ENCODE measurements at regions of chr17 and their contacts with region 1.

Region 1: GRCh38 chr17:56715613-56716357 is 117.9 kb downstream of the C17orf67 start:
- DNase-seq: peak; percentile 83
- ATAC-seq: peak; percentile 99
- H3K4me3 ChIP-seq: no peak overlapping the region
- H3K27ac ChIP-seq: no peak overlapping the region
- H3K4me1 ChIP-seq: peaks cover 0 to 4% of the 10 kb centered on the region in 2 experiments; a peak in 1 of 4 replicates
- H3K27me3 ChIP-seq: no peaks in the 10 kb centered on the region
- CTCF ChIP-seq: peak; percentile 85 to 98 (median 97)
- POLR2A ChIP-seq: no peak
- RAD21 ChIP-seq: peak; percentile 98

Region 2: DNA sequence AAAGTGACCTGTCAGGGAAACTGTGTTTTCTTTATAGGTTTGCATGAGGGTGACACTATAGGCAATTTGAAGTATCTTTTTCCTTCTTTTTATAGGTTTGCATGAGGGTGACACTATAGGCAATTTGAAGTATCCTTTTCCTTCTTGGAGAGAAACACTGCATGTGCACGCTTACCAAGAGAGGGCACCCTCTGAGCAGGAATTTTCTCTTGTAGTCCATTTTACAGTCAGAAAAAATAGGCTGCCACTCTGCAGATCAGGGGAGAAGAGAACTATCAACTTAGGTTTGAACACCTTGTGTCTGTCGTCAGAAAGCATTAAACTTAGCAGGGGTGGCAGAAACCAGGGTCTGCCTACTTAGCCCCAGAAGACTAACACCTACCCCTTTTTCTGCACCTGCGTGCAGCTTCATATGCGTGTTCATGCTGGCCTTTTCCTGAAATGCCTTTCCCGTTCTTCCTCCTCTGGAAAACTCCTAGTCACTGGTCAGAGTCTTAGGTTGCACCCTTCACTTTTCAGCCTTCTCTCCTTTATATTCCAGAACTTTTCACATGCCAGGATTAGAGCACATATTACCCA is 1188.2 kb before region 1 on chr17:
- CTCF ChIA-PET with region 1: no interaction called
- POLR2A ChIA-PET with region 1: no interaction called
- RAD21 ChIA-PET with region 1: no interaction called
- intact Hi-C with region 1: loop called (anchors 10 kb)
- DNase-seq: peak; percentile 42
- ATAC-seq: no peak
- H3K4me3 ChIP-seq: no peak overlapping the region
- H3K27ac ChIP-seq: no peak overlapping the region
- H3K4me1 ChIP-seq: no peaks in the 10 kb centered on the region
- H3K27me3 ChIP-seq: 0 out of 2 replicates have a peak, but pooled peaks cover 9% of the 10 kb centered on the region
- CTCF ChIP-seq: peak; percentile 55 to 58 (median 57); a peak in 5 of 6 replicates
- POLR2A ChIP-seq: no peak
- RAD21 ChIP-seq: peak; percentile 76

Region 3: DNA sequence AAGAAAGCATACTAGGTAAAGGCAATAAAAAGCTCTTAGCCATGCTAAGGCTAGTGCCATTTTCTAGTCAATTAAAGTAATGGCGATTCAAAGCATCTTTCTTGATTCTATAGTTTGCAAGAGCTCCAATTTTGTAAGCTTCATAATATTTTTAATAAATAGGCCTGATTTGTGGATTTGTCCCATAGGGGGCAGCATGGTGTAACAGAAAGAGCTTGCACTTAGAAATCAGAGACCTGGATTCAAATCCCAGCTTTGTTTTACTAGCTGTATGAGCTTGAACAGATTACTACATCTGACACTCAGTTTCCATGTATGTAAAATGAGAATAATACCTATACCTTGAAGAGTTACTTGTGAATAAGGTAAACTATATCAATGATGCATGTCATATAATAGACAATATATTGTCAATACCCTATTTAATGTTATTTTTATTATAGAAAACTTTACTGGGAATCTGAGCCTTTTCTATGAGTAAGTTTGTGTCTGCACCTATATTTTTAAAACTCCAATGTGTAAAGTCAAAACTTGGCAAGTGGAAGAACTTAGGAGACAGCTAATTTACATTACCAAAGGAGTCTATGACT is 215.9 kb before region 1 on chr17:
- CTCF ChIA-PET with region 1: interaction called, 221 read pairs
- POLR2A ChIA-PET with region 1: interaction called, 7 read pairs
- RAD21 ChIA-PET with region 1: interaction called, 32 to 33 read pairs
- intact Hi-C with region 1: loop called (anchors 1 kb)
- DNase-seq: peak; percentile 57
- ATAC-seq: peak; percentile 54
- H3K4me3 ChIP-seq: no peak overlapping the region
- H3K27ac ChIP-seq: no peak overlapping the region
- H3K4me1 ChIP-seq: no peaks in the 10 kb centered on the region
- H3K27me3 ChIP-seq: peaks cover 35% of the 10 kb centered on the region
- CTCF ChIP-seq: peak; percentile 72 to 80 (median 78)
- POLR2A ChIP-seq: no peak
- RAD21 ChIP-seq: peak; percentile 79

Region 4: DNA sequence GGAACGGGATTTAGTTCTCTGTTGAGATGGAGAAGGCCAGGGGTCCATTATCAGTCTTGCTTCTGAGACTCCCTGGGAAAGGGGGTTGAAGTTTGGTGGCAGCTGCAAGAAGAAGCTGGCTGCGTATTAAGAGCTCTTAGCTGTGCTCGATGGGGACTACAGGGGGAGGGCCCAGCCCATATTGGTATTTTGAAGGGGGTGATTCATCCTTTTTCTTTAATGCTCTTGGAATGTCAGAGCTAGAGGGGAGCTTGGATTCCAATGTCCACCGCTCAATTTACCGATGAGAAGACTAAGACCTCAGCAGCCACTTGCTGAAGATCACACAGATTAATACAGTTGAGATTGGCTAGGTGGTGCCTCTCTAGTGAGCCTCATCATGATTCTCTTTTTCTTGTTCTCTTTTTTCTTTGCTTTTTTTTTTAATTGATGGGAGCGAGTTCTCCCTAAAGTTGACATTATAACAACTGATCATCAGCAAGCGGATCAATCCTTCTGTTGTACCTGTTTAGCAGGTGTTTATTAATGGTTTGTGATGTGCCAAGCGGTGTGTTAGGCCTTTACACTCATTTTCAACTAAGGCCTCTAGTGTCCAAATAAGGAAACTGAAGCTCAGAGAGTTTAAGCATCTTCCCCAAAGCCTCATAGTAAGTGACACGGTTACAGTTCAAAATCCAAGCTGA is 117.2 kb before region 1 on chr17:
- CTCF ChIA-PET with region 1: interaction called, 145 read pairs
- POLR2A ChIA-PET with region 1: no interaction called
- RAD21 ChIA-PET with region 1: interaction called, 23 to 46 read pairs
- intact Hi-C with region 1: no loop called
- DNase-seq: no peak
- ATAC-seq: no peak
- H3K4me3 ChIP-seq: no peak overlapping the region
- H3K27ac ChIP-seq: no peak overlapping the region
- H3K4me1 ChIP-seq: peaks cover 5 to 12% of the 10 kb centered on the region in 2 experiments; a peak in 2 of 4 replicates
- H3K27me3 ChIP-seq: peaks cover 10% of the 10 kb centered on the region; the same call in 1 of the 2 replicates
- CTCF ChIP-seq: peak in 2 of 3 experiments; percentile 24 to 25; a peak in 1 of 6 replicates
- POLR2A ChIP-seq: no peak
- RAD21 ChIP-seq: no peak

Region 5: GRCh38 chr17:56699186-56699895 is 16.4 kb before region 1 on chr17:
- CTCF ChIA-PET with region 1: interaction called, 26 read pairs
- POLR2A ChIA-PET with region 1: interaction called, 5 read pairs
- RAD21 ChIA-PET with region 1: interaction called, 3 to 6 read pairs
- intact Hi-C with region 1: no loop called
- DNase-seq: peak; percentile 98
- ATAC-seq: peak; percentile 97
- H3K4me3 ChIP-seq: peak overlapping the region; percentile 11 to 15
- H3K27ac ChIP-seq: peak overlapping the region; percentile 45
- H3K4me1 ChIP-seq: peaks cover 25 to 31% of the 10 kb centered on the region in 2 experiments
- H3K27me3 ChIP-seq: no peaks in the 10 kb centered on the region
- CTCF ChIP-seq: no peak
- POLR2A ChIP-seq: no peak
- RAD21 ChIP-seq: 0 out of 2 replicates have a peak, but pooled peaks have one; percentile 21

Region 6: GRCh38 chr17:56939901-56940343 is 224.1 kb after region 1 on chr17:
- CTCF ChIA-PET with region 1: no interaction called
- POLR2A ChIA-PET with region 1: no interaction called
- RAD21 ChIA-PET with region 1: no interaction called
- intact Hi-C with region 1: loop called (anchors 1 kb)
- DNase-seq: peak; percentile 50
- ATAC-seq: peak; percentile 89
- H3K4me3 ChIP-seq: no peak overlapping the region
- H3K27ac ChIP-seq: no peak overlapping the region
- H3K4me1 ChIP-seq: peaks cover 4 to 6% of the 10 kb centered on the region in 2 experiments; a peak in 1 of 4 replicates
- H3K27me3 ChIP-seq: no peaks in the 10 kb centered on the region
- CTCF ChIP-seq: peak; percentile 73 to 91 (median 84)
- POLR2A ChIP-seq: no peak
- RAD21 ChIP-seq: peak; percentile 94

Measured in HCT116 (cell line).